ENCODE measurements at regions of chr5 and their contacts with region 1.

Region 1: DNA sequence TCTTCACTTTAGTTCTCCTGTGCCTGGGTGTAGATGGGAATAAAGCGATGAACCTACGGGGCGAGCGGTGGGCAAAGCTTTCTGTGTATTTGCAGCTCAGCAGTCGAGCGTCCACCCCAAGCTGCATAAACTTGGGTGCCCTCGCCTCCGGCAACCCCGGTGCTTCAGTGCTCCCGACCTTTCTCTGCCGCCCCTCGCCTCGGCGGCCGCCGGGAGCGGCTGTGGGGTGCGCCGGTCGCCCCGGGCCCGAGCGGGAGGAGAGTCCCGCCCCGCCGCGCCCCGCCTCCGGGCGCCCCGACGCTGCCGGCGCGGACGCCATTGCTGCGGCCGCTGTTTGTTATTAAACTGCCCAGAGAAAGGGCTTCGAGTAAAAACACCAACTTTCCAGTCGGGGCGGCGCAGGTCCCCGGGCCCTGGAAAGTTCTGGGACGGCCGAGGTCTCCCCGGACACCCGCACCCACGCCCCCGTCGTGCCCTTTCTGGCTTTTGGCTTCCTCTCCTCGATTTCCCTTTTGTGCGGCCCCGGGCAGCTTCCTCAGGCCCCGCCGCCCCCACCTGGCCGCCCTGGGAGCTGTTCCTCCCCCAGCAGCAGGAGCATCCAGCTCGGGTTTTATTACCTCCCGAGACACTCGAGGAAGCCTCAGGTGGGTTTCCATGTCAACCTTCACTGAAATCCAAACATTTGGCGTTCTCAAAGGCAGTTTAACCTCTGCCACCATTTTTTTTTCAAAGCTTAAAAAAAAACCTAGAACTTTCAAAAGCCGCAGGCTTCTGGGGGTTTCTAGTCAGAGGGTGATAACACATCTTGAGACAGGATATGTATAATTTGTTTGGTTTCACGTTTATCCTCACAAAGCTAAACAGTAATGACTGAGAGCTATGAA is 334.3 kb downstream of the CWC27 start:
- DNase-seq: no peak
- H3K4me3 ChIP-seq: peak overlapping the region in 2 of 3 experiments; percentile 21 to 39
- H3K27ac ChIP-seq: no peak overlapping the region
- H3K4me1 ChIP-seq: peaks cover 14% of the 10 kb centered on the region
- H3K27me3 ChIP-seq: no peaks in the 10 kb centered on the region
- CTCF ChIP-seq: peak in 1 of 2 donors; percentile 3

Region 2: GRCh38 chr5:64971513-64971912 is 131.6 kb before region 1 on chr5:
- CTCF ChIA-PET with region 1: no interaction called
- dilution Hi-C with region 1: no loop called
- in situ Hi-C with region 1: no loop called
- intact Hi-C with region 1: loop called (anchors 10 kb)
- DNase-seq: no peak
- H3K4me3 ChIP-seq: no peak overlapping the region
- H3K27ac ChIP-seq: no peak overlapping the region
- H3K4me1 ChIP-seq: no peaks in the 10 kb centered on the region
- H3K27me3 ChIP-seq: no peaks in the 10 kb centered on the region
- CTCF ChIP-seq: no peak

Region 3: GRCh38 chr5:65163698-65164097 is 60.6 kb after region 1 on chr5:
- CTCF ChIA-PET with region 1: no interaction called
- dilution Hi-C with region 1: no loop called
- in situ Hi-C with region 1: no loop called
- intact Hi-C with region 1: no loop called
- DNase-seq: peak; percentile 33
- H3K4me3 ChIP-seq: no peak overlapping the region
- H3K27ac ChIP-seq: no peak overlapping the region
- H3K4me1 ChIP-seq: peaks cover 29% of the 10 kb centered on the region
- H3K27me3 ChIP-seq: no peaks in the 10 kb centered on the region
- CTCF ChIP-seq: no peak

Region 4: GRCh38 chr5:66239034-66239433 is 1136.0 kb after region 1 on chr5:
- CTCF ChIA-PET with region 1: no interaction called
- dilution Hi-C with region 1: no loop called
- in situ Hi-C with region 1: no loop called
- intact Hi-C with region 1: no loop called
- DNase-seq: peak; percentile 32
- H3K4me3 ChIP-seq: no peak overlapping the region
- H3K27ac ChIP-seq: no peak overlapping the region
- H3K4me1 ChIP-seq: no peaks in the 10 kb centered on the region
- H3K27me3 ChIP-seq: peaks cover 4% of the 10 kb centered on the region
- CTCF ChIP-seq: peak; percentile 30 to 52